Activated CD4-positive, alpha-beta T cell treated with anti-CD3 and anti-CD28 coated beads, Interleukin-2, amount 10 ng/mL, durations not matched to agents 24 days and 14 days (primary cell): ENCODE measurements at regions of chr5 and their contacts with region 1.

Region 1: GRCh38 chr5:39058178-39058921 is 15.8 kb downstream of the RICTOR start:
- DNase-seq: no peak
- H3K4me3 Mint-ChIP-seq: peak overlapping the region; percentile 64
- H3K27ac Mint-ChIP-seq: peak overlapping the region; percentile 45
- H3K4me1 Mint-ChIP-seq: peaks cover 39% of the 10 kb centered on the region
- H3K27me3 Mint-ChIP-seq: no peaks in the 10 kb centered on the region

Region 2: GRCh38 chr5:38563624-38564023 is 494.7 kb before region 1 on chr5:
- intact Hi-C with region 1: no loop called
- DNase-seq: no peak
- H3K4me3 Mint-ChIP-seq: no peak overlapping the region
- H3K27ac Mint-ChIP-seq: no peak overlapping the region
- H3K4me1 Mint-ChIP-seq: no peaks in the 10 kb centered on the region
- H3K27me3 Mint-ChIP-seq: peaks cover 30% of the 10 kb centered on the region

Region 3: GRCh38 chr5:39015743-39016586 is 42.4 kb before region 1 on chr5:
- intact Hi-C with region 1: loop called (anchors 5 kb)
- DNase-seq: no peak
- H3K4me3 Mint-ChIP-seq: peak overlapping the region; percentile 18
- H3K27ac Mint-ChIP-seq: peak overlapping the region; percentile 35
- H3K4me1 Mint-ChIP-seq: peaks cover 26% of the 10 kb centered on the region
- H3K27me3 Mint-ChIP-seq: no peaks in the 10 kb centered on the region